Breast epithelium (tissue), 4 donors: ENCODE measurements at regions of chr5 and their contacts with region 1.

Region 1: DNA sequence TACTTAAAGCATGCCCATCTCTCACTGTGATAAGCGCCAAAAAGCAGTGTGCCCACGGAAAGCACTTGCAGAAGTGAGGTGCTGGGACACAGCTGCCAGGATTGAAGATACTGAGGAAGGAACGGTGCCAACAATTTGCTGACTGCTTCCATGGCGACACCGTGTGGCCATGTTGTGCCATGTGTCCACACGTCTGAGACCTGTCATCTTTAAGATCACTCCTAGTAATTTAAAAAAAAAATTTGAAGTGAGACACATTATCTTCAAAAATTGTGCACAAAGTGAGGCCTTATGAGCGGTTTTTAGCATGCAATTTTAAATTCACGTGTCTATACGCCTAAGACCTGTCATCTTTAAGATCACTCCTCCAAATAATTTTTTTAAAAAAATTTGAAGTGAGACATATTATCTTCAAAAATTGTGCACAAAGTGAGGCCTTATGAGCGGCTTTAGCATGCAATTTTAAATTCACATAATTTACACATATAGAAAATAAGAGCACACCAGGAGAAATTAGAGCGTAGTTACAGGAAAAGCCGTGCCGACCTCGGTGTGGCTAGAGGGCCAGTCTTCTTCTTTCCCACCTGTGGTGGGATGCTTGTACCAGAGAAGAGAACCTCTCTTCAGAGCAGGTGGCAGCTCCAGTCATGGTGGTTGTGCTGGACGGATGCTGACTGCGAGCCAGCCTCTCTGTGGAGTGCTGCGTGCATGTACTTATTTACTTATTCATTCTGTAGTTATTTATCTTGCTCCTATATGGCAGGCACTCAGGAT is 21.4 kb upstream of the FLT4 start:
- DNase-seq: peak in 1 of 2 donors; percentile 22
- H3K4me3 ChIP-seq: no peak overlapping the region
- H3K27ac ChIP-seq: no peak overlapping the region
- H3K4me1 ChIP-seq: no peaks in the 10 kb centered on the region
- H3K27me3 ChIP-seq: peaks cover 0 to 14% of the 10 kb centered on the region in 2 donors
- CTCF ChIP-seq: peak; percentile 36 to 53 (median 50)
- POLR2A ChIP-seq: no peak

Region 2: GRCh38 chr5:180428598-180428997 is 242.2 kb before region 1 on chr5:
- intact Hi-C with region 1: loop called (anchors 5 kb)
- DNase-seq: no peak
- H3K4me3 ChIP-seq: no peak overlapping the region
- H3K27ac ChIP-seq: no peak overlapping the region
- H3K4me1 ChIP-seq: no peaks in the 10 kb centered on the region
- H3K27me3 ChIP-seq: no peaks in the 10 kb centered on the region
- CTCF ChIP-seq: no peak
- POLR2A ChIP-seq: no peak

Region 3: DNA sequence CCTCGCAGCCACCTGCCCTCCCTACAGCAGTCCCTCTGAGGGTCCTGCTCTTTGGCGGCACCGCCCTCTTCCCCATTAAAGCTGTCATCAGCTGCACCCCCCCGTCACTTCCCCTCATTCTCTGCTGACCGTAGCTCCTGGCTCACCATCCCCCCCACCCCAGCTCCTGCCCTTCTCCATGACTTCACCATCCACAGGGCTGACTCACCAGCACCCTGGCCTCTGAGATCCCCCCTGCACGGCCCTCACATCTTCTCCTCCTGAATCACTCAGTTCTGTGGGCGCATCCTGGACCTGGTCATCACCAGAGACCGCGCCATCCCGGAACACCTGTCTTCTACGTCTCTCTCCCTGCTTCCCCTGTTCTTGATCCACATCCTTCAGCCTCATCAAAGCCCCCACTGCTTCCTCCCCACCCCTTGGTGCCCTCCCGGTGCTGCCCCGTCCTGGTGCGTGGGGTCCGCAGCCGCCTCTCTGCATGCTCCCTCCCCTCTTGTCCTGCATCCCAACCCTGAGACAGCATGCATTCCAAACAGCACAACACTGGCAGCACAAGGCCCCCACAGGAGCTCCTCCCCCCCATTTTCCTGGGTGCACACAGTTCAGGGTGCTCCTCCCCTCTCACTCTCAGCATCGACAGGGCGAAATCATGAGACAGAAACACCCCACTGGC is 34.2 kb before region 1 on chr5:
- intact Hi-C with region 1: no loop called
- DNase-seq: peak in 1 of 2 donors; percentile 36
- H3K4me3 ChIP-seq: no peak overlapping the region
- H3K27ac ChIP-seq: no peak overlapping the region
- H3K4me1 ChIP-seq: no peaks in the 10 kb centered on the region
- H3K27me3 ChIP-seq: no peaks in the 10 kb centered on the region
- CTCF ChIP-seq: no peak
- POLR2A ChIP-seq: no peak

Region 4: DNA sequence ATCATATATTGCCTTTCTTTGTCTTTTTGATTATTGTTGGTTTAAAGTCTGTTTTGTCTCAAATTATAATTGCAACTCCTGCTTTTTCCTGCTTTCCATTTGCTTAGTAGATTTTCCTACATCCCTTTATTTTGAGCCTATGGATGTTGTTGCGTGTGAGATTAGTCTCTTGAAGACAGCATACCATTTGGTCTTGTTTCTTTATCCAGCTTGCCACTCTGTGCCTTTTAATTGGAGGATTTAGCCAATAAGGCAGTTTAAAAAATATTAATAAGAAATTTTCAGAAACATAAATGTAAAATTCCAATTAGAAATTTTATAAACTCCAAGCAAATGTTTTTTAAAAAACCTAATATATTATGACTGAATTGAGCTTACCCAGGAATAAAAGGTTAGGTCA is 252.2 kb after region 1 on chr5:
- intact Hi-C with region 1: no loop called
- DNase-seq: no peak
- H3K4me3 ChIP-seq: no peak overlapping the region
- H3K27ac ChIP-seq: no peak overlapping the region
- H3K4me1 ChIP-seq: no peaks in the 10 kb centered on the region
- H3K27me3 ChIP-seq: no peaks in the 10 kb centered on the region
- CTCF ChIP-seq: no peak
- POLR2A ChIP-seq: no peak